Left ventricle myocardium superior (tissue), 1 donor: ENCODE measurements at regions of chr1 and their contacts with region 1.

Region 1: GRCh38 chr1:182143154-182143657 is 81.7 kb upstream of the ZNF648 start:
- DNase-seq: peak; percentile 95
- ATAC-seq: peak; percentile 75

Region 2: DNA sequence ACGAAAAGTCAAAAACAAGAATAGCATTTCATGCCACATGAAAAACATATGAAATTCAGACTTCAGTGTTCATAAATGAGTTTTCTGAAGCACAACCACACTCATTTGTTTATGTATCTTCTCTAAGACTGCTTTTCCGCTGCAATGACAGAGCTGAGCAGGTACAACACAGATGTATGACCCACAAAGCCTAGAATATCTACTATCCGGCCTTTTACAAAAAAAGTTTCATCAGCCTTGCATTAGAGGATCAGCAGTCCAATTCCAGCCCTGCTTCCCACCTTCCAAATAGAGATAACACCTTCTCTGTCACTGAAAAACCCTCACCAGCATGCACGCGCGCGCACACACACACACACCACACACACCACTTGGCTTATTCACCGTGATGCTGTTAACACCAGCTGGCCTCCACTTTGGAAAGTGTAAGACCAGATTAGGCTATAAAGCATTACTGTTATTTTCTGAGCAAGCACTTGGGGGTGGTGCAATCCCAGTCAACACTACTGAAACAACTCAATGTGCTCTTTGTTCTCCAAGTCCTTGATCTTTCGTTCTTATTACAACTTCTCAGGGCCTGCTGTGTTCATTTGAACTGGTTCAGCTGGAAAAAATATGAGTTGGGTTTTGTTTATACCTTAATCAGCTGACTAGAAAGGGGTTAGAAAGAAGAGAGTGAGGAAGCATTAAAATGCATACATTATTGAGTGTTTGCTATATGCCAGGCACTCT is 158.4 kb after region 1 on chr1:
- intact Hi-C with region 1: loop called (anchors 10 kb)
- DNase-seq: peak; percentile 68
- ATAC-seq: peak; percentile 82